Activated CD8-positive, alpha-beta memory T cell treated with anti-CD3 and anti-CD28 coated beads, Interleukin-2, amount 10 ng/mL, durations not matched to agents 7 days and 5 days (primary cell): ENCODE measurements at regions of chr17 and their contacts with region 1.

Region 1: DNA sequence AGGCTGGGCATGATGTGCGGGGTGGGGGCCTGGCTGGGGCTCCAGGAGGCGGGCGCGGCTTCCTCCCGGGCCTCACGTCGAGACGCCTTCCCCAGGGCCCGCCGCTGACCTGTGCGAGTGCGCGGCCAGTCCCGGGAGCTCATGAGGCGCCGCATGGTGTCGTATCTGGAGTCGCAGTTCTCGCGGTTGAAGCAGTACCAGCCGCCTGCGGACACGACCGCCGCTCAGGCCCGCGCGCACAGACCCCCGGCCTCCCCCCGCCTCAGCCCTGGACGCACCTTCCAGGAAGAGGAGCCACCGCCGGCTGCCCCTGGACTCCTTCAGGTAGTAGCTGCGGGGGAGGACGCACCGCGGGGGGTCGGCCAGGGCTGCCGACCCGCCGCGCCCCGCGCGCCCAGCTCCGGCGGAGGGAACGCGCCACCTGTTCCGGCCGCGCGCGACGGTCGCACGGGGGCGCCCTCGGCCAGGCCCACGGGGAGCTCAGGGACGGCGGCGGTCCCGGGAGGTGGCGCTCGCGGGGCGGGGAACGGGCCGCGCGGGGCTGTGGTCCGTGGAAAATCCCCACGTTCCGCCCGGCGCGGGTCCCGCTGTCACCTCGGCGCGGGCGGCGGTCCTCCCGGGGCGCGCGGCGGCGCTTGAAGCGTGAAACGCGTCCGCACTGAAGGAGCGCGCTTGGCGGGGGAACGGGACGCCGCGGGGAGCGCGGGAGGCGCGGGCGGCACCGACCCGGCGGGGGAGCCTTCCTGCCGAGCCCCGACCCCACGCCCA is 1.4 kb downstream of the NOTUM start:
- DNase-seq: peak; percentile 75
- ATAC-seq: peak; percentile 96
- H3K4me3 Mint-ChIP-seq: no peak overlapping the region
- H3K27ac Mint-ChIP-seq: no peak overlapping the region
- H3K4me1 Mint-ChIP-seq: no peaks in the 10 kb centered on the region
- H3K27me3 Mint-ChIP-seq: peaks cover 41% of the 10 kb centered on the region

Region 2: GRCh38 chr17:81944858-81945257 is 14.7 kb before region 1 on chr17:
- CTCF ChIA-PET with region 1: interaction called, 17 read pairs
- DNase-seq: no peak
- ATAC-seq: no peak
- H3K4me3 Mint-ChIP-seq: no peak overlapping the region
- H3K27ac Mint-ChIP-seq: no peak overlapping the region
- H3K4me1 Mint-ChIP-seq: no peaks in the 10 kb centered on the region
- H3K27me3 Mint-ChIP-seq: peaks cover 5% of the 10 kb centered on the region

Region 3: DNA sequence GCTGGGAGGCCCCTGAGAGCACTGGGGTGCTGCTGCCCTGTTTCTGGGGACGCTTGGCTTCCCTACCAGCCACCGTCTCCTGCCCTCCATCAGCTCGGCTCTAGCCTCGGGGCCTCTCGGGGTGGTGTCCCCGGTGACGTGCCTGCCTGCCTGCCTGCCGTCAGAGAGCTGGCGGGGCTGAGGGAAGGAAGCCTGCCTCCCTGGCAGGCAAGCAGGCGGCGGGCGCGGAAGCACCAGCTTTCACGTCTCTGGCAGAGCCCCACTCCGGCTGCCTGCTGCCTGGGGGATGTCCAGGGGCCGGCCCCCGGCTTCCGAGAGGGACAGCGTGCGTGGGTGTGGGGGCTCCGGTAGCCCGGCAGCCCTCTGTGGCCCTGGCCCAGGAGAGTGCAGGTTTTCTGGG is 53.8 kb after region 1 on chr17:
- CTCF ChIA-PET with region 1: interaction called, 181 read pairs
- DNase-seq: no peak
- ATAC-seq: no peak
- H3K4me3 Mint-ChIP-seq: no peak overlapping the region
- H3K27ac Mint-ChIP-seq: no peak overlapping the region
- H3K4me1 Mint-ChIP-seq: peaks cover 7% of the 10 kb centered on the region
- H3K27me3 Mint-ChIP-seq: no peaks in the 10 kb centered on the region

Region 4: DNA sequence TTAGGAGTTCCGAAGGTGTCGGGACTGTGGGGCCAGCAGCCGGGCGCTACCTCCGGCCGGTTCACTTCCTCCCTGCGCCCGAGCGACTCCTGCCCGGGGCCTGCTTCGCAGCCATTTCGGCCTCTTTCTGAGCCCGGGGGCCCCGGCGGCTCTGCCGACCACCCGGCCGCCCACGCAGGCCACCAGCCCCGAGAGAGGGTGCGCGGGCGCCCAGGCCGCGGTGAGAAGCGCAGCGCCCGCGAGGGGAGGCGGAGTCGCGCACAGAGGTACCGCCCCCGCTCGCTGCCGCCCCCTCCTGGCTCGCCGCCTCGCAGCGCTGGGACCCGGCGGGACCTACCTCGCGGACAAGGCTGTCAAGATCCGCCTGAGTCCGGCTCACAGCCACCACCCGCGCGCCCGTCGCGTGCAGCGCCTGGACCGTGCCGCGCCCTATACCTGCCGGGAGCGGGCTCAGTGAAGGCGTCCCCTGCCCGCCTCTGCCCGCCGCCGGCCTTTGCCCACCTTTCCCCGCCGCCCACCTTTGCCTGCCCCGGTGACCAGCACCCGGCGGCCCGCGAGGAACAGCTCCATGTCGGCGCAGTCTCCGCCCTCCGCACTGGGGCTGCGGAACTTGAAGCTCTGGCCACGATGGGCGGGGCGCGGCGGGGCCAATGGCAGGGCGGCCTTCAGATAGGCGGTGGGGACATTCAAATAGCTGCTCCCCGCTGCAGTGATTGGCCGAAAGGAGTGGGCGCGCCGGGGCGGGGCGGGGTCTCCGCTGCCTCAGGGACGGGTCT is 77.8 kb after region 1 on chr17 and contains the start of gene DCXR:
- CTCF ChIA-PET with region 1: interaction called, 14 read pairs
- DNase-seq: peak; percentile 98
- ATAC-seq: peak; percentile 95
- H3K4me3 Mint-ChIP-seq: peak within 1 kb of the TSS; percentile 74
- H3K27ac Mint-ChIP-seq: peak within 1 kb of the TSS; percentile 91
- H3K4me1 Mint-ChIP-seq: peaks cover 24% of the 10 kb centered on the region
- H3K27me3 Mint-ChIP-seq: no peaks in the 10 kb centered on the region
- total RNA-seq, gene DCXR: 120 to 124 TPM

Region 5: GRCh38 chr17:82056729-82057621 is 97.4 kb after region 1 on chr17:
- CTCF ChIA-PET with region 1: no interaction called
- DNase-seq: no peak
- ATAC-seq: no peak
- H3K4me3 Mint-ChIP-seq: no peak overlapping the region
- H3K27ac Mint-ChIP-seq: no peak overlapping the region
- H3K4me1 Mint-ChIP-seq: peaks cover 18% of the 10 kb centered on the region
- H3K27me3 Mint-ChIP-seq: no peaks in the 10 kb centered on the region